Activated naive CD4-positive, alpha-beta T cell treated with anti-CD3 and anti-CD28 coated beads for 36 hours (primary cell): ENCODE measurements at regions of chr15 and their contacts with region 1.

Region 1: GRCh38 chr15:49046220-49047102 is at the start of gene SECISBP2L:
- DNase-seq: peak; percentile 95
- H3K4me3 Mint-ChIP-seq: peak within 1 kb of the TSS; percentile 91
- H3K27ac Mint-ChIP-seq: peak within 1 kb of the TSS; percentile 81
- H3K4me1 Mint-ChIP-seq: peaks cover 19% of the 10 kb centered on the region
- H3K27me3 Mint-ChIP-seq: no peaks in the 10 kb centered on the region
- total RNA-seq, gene SECISBP2L: 17.4 to 18.6 TPM

Region 2: DNA sequence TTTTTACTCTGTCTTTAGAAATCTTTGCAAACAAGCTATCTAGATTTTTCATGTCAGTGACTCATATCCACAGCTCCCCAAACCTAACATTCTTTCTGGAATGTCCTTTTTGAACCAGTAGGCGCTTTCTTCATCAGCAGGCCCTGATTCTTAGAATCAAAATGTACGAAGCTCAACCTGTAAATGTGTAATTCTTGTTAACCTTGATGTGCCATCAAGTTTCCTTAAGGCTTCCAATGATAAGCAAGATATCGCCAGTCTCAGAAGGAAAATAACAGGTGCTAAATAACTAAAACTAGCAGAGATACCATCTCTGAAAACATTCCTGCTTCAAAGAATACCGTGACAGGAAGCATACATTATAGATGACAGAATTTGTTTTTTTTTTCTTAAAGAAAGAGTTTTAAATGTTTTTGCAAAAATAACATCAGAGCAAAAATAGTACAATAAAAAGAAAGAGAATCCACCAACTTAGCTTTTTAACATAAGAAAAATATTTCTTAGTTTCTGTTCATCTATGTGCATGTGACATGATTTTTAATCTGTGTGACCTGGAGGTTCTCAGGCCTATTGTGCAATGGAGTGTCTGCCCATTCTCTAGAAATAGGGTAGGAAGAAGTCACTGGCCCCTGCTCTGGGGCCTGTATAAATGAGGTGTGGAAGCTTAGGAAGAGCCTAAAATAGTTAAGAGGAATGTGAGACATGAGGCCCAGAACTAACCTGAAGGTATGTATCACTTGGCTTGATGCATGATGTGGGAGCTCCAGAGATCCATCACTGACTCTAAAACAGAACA is 14.4 kb after region 1 on chr15:
- CTCF ChIA-PET with region 1: interaction called, 6 read pairs
- intact Hi-C with region 1: loop called (anchors 1 kb)
- DNase-seq: no peak
- H3K4me3 Mint-ChIP-seq: no peak overlapping the region
- H3K27ac Mint-ChIP-seq: peak overlapping the region; percentile 75
- H3K4me1 Mint-ChIP-seq: peaks cover 16% of the 10 kb centered on the region
- H3K27me3 Mint-ChIP-seq: no peaks in the 10 kb centered on the region

Region 3: GRCh38 chr15:49155110-49155833 is 108.8 kb after region 1 on chr15 and contains the start of gene COPS2:
- CTCF ChIA-PET with region 1: no interaction called
- intact Hi-C with region 1: loop called (anchors 1 kb)
- DNase-seq: peak; percentile 97
- H3K4me3 Mint-ChIP-seq: peak within 1 kb of the TSS; percentile 98
- H3K27ac Mint-ChIP-seq: peak within 1 kb of the TSS; percentile 97
- H3K4me1 Mint-ChIP-seq: peaks cover 41% of the 10 kb centered on the region
- H3K27me3 Mint-ChIP-seq: no peaks in the 10 kb centered on the region
- total RNA-seq, gene COPS2: 79.7 to 86.4 TPM

Region 4: GRCh38 chr15:49620658-49621368 is 574.4 kb after region 1 on chr15 and contains the starts of genes DTWD1 and FAM227B:
- CTCF ChIA-PET with region 1: no interaction called
- intact Hi-C with region 1: loop called (anchors 2 kb)
- DNase-seq: peak; percentile 96
- H3K4me3 Mint-ChIP-seq: peak within 1 kb of the TSS; percentile 88
- H3K27ac Mint-ChIP-seq: peak within 1 kb of the TSS; percentile 91
- H3K4me1 Mint-ChIP-seq: peaks cover 33% of the 10 kb centered on the region
- H3K27me3 Mint-ChIP-seq: no peaks in the 10 kb centered on the region
- total RNA-seq, gene DTWD1: 18.5 to 19.4 TPM
- total RNA-seq, gene FAM227B: 2.0 to 2.8 TPM